Endothelial cell of umbilical vein (primary cell): ENCODE measurements at regions of chr15 and their contacts with region 1.

Region 1: DNA sequence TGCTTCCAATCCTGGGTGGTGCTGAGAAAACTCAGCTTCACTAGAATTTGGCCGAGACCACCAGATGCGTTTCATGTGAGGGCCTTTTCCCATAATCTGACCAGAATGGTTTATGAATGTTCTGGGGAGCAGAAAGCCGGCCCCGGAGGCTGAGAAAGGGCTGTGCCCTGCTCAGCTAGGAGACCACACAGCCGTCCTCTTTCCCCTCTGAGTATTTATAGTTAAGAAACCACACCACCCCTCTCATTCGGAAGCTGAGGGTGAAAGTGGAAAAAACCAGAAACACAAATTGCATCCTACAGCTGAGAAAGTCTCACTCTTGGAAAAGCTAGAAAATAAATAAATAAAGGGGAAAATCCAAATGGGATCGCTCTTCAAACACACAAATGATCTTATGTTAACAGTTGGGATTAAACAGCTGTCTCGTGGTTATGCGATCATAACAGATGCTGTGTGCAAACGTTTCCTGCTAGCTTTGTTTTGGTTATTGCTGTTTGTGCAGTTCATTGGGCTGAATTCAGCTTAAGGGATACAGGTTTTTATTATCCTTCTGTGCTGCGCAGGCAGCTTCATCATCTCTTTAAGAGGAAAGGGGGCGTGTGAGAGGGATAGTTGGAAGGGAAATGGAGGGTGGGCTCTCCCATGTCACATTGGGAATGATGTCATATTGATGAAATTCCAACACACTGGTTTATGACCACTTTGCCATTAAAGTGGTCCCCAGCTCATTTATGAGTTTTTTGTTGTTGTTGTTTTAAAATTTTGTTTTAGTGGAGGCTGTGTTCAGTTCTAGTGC is 1026.2 kb upstream of the NR2F2 start:
- DNase-seq: peak; percentile 98
- H3K4me3 ChIP-seq: no peak overlapping the region
- H3K27ac ChIP-seq: peak overlapping the region; percentile 97
- H3K4me1 ChIP-seq: peaks cover 52% of the 10 kb centered on the region
- H3K27me3 ChIP-seq: no peaks in the 10 kb centered on the region
- CTCF ChIP-seq: no peak
- POLR2A ChIP-seq: no peak

Region 2: DNA sequence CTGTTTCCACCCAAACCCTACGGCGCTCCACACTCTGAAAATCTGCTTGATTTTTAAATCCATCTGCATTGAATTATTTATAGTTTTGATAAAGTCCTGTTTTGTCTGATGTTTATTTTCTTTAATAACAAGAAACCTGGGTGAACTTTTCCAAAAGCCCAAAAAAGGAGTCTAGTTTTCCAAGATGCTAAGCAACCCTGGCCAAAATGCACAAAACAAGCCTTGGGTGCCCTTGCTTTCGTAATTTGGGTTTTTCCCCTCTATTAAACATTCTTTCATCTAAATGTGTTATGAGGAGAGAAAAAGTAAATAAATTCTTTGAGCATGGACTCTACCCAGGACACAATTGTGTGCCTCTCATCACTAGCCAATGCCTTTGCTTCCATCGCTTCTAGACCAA is 604.1 kb before region 1 on chr15:
- CTCF ChIA-PET with region 1: no interaction called
- POLR2A ChIA-PET with region 1: no interaction called
- dilution Hi-C with region 1: no loop called
- intact Hi-C with region 1: loop called (anchors 1 kb)
- DNase-seq: no peak
- H3K4me3 ChIP-seq: no peak overlapping the region
- H3K27ac ChIP-seq: no peak overlapping the region
- H3K4me1 ChIP-seq: peaks cover 44% of the 10 kb centered on the region
- H3K27me3 ChIP-seq: no peaks in the 10 kb centered on the region
- CTCF ChIP-seq: no peak
- POLR2A ChIP-seq: no peak

Region 3: DNA sequence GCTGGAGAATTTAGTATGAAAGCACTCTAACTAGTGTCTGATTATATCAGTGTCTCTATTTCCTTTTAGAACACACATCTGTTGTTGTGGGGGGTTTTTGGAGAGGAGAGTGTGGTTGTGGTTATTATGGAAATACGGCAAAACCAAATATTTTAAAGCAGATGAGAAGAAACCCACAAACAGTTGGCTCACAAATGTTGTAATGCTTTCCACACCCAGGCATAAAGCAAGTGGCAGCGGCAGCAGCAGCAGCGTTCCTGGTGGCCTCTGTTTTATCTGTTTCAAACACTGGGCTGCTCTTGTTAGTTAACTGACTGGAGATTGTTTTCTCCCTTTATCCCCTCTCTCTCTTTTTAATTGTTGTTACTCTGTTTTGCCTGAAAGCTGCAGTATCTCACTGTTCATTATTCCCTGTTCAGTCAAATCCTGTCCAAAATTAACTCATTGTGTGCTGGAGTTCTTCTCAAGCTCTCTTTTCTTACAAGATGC is 19.4 kb before region 1 on chr15:
- CTCF ChIA-PET with region 1: interaction called, 7 read pairs
- POLR2A ChIA-PET with region 1: no interaction called
- dilution Hi-C with region 1: no loop called
- intact Hi-C with region 1: loop called (anchors 1 kb)
- DNase-seq: peak; percentile 88
- H3K4me3 ChIP-seq: no peak overlapping the region
- H3K27ac ChIP-seq: peak overlapping the region; percentile 15
- H3K4me1 ChIP-seq: peaks cover 63% of the 10 kb centered on the region
- H3K27me3 ChIP-seq: no peaks in the 10 kb centered on the region
- CTCF ChIP-seq: peak; percentile 21 to 28
- POLR2A ChIP-seq: no peak

Region 4: DNA sequence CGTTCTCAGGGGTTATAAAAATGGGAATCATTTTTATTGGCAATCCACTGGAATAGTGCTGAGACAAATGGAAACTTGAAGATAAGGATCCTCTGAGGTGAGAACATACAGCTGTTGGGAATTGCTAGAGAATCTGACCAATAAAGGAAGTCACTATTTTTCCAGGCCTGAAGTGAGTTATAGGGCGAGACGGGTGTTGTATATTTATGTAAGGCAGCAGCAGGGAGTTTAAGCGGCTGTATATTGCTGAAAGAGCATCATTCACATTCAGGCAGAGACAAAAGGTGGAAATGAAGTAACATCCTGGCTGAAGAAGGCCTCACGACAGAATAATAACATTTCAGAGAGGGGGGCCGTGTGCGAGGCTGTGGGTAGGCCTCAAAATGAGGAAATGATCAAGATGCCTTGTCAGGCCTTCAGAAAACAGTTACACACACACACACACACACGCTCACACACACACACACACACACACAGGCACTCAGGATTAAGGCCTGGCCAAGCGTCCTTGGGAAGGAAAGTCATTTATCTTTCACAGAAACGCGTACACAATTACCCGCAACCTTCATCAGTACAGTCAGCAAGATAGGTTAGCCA is 61.3 kb after region 1 on chr15:
- CTCF ChIA-PET with region 1: no interaction called
- POLR2A ChIA-PET with region 1: interaction called, 3 read pairs
- dilution Hi-C with region 1: no loop called
- intact Hi-C with region 1: loop called (anchors 1 kb)
- DNase-seq: peak; percentile 100
- H3K4me3 ChIP-seq: no peak overlapping the region
- H3K27ac ChIP-seq: peak overlapping the region; percentile 98
- H3K4me1 ChIP-seq: peaks cover 37% of the 10 kb centered on the region
- H3K27me3 ChIP-seq: no peaks in the 10 kb centered on the region
- CTCF ChIP-seq: no peak
- POLR2A ChIP-seq: peak; percentile 87

Region 5: GRCh38 chr15:95604634-95605036 is 300.3 kb after region 1 on chr15:
- CTCF ChIA-PET with region 1: no interaction called
- POLR2A ChIA-PET with region 1: no interaction called
- dilution Hi-C with region 1: no loop called
- intact Hi-C with region 1: loop called (anchors 2 kb)
- DNase-seq: peak; percentile 95
- H3K4me3 ChIP-seq: no peak overlapping the region
- H3K27ac ChIP-seq: peak overlapping the region; percentile 50
- H3K4me1 ChIP-seq: peaks cover 33% of the 10 kb centered on the region
- H3K27me3 ChIP-seq: no peaks in the 10 kb centered on the region
- CTCF ChIP-seq: no peak
- POLR2A ChIP-seq: no peak

Region 6: DNA sequence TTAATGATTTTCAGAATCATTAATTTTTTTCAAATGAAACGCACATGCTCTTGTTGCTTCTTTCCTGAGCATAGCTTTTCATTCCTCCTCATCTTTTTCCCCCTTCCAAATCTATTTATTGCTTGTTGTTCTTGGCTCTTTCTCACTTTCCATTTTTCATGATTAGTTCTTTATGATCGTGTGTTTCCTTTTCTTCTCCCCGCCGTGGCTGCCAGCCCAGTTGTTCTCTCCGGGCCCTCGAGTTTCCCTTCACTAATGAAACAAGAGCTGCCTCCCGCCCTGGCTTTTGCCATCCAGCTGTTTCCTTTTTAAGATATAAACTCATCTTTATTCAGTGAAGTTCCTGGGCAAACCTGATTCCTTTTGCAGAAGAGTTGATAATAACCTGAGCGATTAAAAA is 855.9 kb after region 1 on chr15:
- CTCF ChIA-PET with region 1: interaction called, 5 read pairs
- POLR2A ChIA-PET with region 1: no interaction called
- dilution Hi-C with region 1: no loop called
- intact Hi-C with region 1: loop called (anchors 5 kb)
- DNase-seq: peak; percentile 95
- H3K4me3 ChIP-seq: peak overlapping the region in 1 of 3 experiments; percentile 26
- H3K27ac ChIP-seq: peak overlapping the region; percentile 28
- H3K4me1 ChIP-seq: peaks cover 33% of the 10 kb centered on the region
- H3K27me3 ChIP-seq: no peaks in the 10 kb centered on the region
- CTCF ChIP-seq: no peak
- POLR2A ChIP-seq: no peak